Transverse colon (tissue), 4 donors: ENCODE measurements at regions of chr16 and their contacts with region 1.

Region 1: DNA sequence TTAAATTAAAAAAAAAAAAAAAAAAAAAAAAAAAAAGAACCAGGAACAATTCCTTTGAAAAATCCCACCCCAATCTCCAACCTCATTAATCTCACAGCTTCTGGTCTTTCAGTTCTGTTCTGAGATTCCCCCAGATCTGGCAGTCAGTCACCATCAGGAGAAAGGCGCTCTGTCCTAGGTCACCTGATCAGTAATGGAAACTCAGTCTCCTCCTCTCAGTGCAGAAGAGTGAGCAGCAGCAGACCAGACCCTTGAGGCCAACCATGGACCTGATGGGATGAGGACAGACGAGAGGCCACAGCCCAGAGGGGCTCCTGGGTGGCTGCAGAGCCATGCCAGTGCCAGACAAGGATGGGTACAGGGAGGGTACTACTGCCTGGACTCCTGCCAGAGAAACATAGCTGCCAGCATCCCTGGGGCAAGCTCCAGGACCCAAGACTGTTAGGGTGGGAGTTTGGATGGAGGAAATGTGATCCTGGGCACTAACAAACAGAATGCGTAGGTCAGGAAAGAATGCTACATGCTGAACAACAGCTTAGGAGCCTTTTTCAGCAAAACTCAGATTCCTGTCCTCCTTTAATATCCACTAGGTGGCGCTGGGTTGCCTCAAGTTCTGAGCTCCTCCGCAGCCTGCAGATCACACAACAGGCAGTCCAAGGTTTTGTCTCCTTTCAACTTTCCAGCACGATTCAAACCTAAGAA is 28.7 kb downstream of the MPG start:
- DNase-seq: peak; percentile 46
- H3K4me3 ChIP-seq: no peak overlapping the region
- H3K27ac ChIP-seq: no peak overlapping the region
- H3K4me1 ChIP-seq: peaks cover 0 to 2% (median 0%) of the 10 kb centered on the region in 4 donors
- H3K27me3 ChIP-seq: no peaks in the 10 kb centered on the region
- CTCF ChIP-seq: peak; percentile 73 to 83 (median 76)
- EP300 ChIP-seq: no peak
- POLR2A ChIP-seq: no peak

Region 2: DNA sequence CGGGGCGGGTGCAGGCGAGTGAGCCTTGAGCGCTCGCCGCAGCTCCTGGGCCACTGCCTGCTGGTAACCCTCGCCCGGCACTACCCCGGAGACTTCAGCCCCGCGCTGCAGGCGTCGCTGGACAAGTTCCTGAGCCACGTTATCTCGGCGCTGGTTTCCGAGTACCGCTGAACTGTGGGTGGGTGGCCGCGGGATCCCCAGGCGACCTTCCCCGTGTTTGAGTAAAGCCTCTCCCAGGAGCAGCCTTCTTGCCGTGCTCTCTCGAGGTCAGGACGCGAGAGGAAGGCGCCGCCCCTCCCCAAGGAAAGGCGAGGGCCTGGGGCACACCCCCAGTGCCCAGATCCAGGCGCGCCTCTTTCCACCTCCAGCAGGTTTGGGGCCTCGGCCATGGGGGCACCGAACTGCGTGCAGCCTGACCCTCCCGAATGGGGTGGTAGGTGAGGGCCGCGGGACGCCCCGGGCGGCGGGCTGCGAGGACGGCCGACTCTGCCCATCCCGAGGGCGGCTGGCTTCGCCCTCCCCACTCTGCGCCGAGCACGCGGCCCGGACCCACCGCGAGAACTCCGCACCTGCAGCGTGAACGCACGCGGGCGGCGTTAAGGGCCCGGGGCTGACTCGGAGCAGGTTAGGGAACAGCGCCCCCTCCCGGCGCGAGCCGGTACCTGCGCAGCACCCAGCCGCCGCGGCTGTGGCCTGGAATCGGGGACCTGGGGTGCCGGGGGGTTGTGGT is 74.3 kb after region 1 on chr16:
- in situ Hi-C with region 1: loop called in 1 of 4 experiments (anchors 5 kb)
- intact Hi-C with region 1: loop called (anchors 5 kb)
- DNase-seq: peak; percentile 82
- H3K4me3 ChIP-seq: peak overlapping the region in 2 of 4 donors; percentile 22 to 41
- H3K27ac ChIP-seq: no peak overlapping the region
- H3K4me1 ChIP-seq: peaks cover 12 to 24% (median 20%) of the 10 kb centered on the region in 4 donors
- H3K27me3 ChIP-seq: peaks cover 46% of the 10 kb centered on the region
- CTCF ChIP-seq: peak; percentile 91 to 99 (median 98)
- EP300 ChIP-seq: no peak
- POLR2A ChIP-seq: peak; percentile 5